Right cardiac atrium (tissue), 5 donors: ENCODE measurements at regions of chr16 and their contacts with region 1.

Region 1: DNA sequence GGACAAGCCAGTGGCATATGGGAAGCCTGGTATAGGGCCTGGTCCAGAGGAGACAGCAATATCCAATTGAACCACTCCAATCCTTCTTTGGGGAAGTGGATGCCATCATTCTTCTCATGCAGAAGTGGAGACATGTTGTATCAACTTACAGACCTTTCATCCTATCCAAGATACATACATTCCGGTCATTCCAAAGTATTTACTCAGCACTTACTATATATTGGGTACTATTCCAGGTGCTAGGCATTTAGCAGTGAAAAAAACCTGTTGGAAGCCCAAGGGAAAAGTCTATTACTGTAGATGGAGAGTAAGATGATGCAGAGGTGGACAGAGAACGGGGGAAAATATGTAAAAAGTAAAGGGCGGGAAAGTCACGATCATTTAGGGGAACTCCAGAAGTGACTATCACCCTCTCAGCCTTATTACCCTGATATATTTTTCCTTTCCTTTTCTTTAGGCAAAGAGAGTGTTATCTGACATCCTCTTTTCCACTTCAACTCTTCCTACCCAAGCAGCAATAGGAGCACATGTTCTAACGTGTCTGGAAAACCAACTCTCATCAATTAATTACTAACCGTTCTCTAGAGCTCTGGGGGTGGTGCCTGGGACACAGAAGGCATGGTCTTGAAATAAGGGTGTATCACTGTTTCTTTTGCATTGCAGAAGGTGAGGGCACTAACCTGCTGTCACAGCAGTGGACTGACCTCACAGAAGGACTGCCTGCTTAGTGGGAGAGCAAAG is 210.1 kb upstream of the MAF start:
- DNase-seq: no peak
- ATAC-seq: no peak
- H3K4me3 ChIP-seq: no peak overlapping the region
- H3K27ac ChIP-seq: no peak overlapping the region
- H3K4me1 ChIP-seq: no peaks in the 10 kb centered on the region
- H3K27me3 ChIP-seq: no peaks in the 10 kb centered on the region

Region 2: DNA sequence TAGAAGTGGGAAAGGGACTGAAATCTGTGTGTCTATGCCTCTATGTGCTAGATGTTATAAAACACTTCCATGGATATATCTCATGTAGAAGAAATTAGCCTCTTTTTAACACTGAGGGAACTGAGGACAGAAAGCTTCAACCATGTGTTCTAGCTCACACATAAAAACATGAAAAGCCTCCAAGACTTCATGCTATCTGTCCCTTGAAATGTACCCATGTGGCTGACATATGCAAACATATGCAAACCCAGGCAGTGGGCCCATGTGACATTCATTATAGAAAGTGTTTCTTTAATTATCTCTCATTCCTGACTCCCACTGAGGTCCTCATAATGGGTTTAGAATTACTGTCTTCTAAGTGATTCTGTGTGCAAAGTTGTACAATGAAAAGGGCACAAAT is 75.3 kb before region 1 on chr16:
- intact Hi-C with region 1: loop called in 1 of 4 experiments (anchors 10 kb)
- DNase-seq: no peak
- ATAC-seq: no peak
- H3K4me3 ChIP-seq: no peak overlapping the region
- H3K27ac ChIP-seq: no peak overlapping the region
- H3K4me1 ChIP-seq: no peaks in the 10 kb centered on the region
- H3K27me3 ChIP-seq: no peaks in the 10 kb centered on the region

Region 3: DNA sequence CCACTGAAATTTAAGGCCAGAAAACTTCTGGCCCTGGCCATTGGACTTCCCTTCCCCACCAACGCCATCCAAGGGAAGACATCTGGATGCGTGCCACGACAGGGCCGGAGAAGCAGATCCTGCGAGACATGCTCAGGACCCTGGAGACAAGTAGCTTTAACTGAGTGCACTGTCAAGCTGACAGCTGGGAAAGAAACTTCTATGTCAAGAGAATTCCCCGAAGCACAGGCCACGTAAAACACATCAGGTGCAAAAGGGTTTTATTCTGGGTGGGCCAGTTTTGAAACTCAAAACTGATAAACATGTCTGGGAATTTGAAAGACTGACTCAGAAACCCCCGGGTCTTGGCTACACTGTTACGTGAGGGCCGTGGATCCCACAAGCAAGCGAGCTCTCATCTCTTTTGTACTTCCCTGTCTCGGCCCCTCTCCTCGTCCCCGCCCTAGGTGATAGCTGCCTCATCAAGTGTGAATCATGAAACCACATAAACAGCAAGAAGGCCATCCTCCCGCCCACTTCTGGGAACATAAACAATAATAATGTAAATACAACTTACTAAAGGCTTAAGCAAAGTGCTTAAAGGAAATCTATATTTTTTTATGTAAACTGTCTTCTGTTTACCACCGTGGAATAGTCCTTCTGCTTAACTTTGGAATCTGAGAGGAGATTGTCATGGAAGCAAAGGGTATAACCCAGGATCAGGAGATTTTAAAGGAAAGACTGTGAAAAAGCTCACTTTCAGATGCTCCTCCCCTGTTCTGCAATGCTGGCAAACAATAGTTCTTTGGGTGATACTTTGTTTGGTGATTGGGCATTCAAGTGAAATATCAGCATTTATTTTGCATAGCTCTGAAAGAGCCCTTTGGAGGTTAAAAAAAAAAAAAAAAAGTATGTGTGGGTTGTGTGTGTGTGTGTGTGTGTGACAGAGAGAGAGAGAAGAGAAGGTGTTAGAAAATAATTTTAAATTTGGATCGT is 195.9 kb after region 1 on chr16:
- intact Hi-C with region 1: no loop called
- DNase-seq: peak in 2 of 3 donors; percentile 22 to 62
- ATAC-seq: no peak
- H3K4me3 ChIP-seq: no peak overlapping the region
- H3K27ac ChIP-seq: no peak overlapping the region
- H3K4me1 ChIP-seq: no peaks in the 10 kb centered on the region
- H3K27me3 ChIP-seq: no peaks in the 10 kb centered on the region

Region 4: GRCh38 chr16:80147026-80147655 is 336.5 kb after region 1 on chr16:
- intact Hi-C with region 1: no loop called
- DNase-seq: no peak
- ATAC-seq: no peak
- H3K4me3 ChIP-seq: no peak overlapping the region
- H3K27ac ChIP-seq: no peak overlapping the region
- H3K4me1 ChIP-seq: no peaks in the 10 kb centered on the region
- H3K27me3 ChIP-seq: no peaks in the 10 kb centered on the region